ENCODE measurements at regions of chr3 and their contacts with region 1.

Region 1: GRCh38 chr3:172039436-172040077 is at the start of gene FNDC3B:
- DNase-seq: peak; percentile 97
- total RNA-seq, gene FNDC3B: 139 TPM

Region 2: DNA sequence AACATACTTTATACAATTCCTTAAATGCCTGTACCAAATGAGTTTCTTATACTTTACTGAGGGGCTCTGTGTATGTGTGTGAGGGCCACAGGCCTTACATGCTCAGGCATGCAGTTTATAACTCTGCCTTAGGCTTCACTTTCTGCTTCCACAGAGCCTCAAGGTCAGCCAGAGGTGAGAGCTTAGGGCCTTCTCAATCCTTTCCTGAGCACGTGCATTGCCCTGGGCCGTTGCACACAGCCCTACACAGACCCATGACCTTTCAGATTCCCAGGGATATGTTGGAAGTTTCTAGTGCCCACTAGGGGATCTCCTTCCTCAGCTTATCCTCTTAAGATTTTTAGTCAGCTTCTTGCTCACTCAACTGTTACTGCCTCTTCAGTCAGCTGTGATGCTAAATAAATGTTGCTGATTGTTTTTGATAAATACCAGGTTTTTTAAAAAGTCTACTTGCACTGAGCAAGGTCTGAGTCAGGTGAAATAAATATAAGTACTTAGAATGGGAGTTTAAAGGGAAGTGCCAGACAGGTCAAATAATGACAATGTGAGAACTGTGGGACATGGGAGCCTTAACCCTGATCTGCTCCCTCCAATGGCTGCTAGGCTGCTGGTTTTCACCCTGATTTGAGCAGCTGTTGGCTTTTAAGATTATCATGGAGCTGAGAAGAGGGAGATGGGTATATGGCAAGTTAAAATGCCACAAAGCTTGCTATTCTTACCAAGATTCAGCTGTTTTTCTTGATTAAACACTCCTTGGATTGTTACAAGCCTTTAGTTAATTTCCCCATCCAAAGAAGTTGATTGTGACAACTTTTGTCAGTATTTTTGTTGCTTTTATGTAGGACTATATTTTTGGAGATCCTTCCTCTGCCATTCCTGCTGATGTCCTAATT is 398.8 kb before region 1 on chr3:
- intact Hi-C with region 1: no loop called
- DNase-seq: no peak

Region 3: GRCh38 chr3:171809821-171810628 is 229.5 kb before region 1 on chr3 and contains the start of gene PLD1:
- intact Hi-C with region 1: loop called (anchors 2 kb)
- DNase-seq: peak; percentile 91
- total RNA-seq, gene PLD1: 56.5 TPM

Region 4: DNA sequence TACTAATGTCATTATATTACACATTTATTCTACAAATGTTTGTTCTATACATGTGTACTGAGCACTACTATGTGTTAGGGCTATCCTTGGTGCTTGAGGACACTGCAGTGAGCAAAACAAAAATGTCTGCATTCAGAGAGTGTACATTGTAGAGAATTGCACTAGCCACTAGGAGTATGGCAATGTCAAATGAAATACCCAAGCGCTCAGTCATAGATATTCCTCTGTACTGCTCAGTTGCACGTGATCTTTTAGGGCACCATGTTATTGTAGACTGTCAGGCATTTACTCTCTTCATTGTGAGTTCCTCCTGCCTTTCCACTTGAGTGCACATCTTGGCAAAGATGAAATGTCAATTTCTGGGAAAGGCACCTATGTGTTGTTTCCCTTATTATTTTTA is 36.7 kb after region 1 on chr3:
- intact Hi-C with region 1: loop called (anchors 5 kb)
- DNase-seq: no peak

Region 5: GRCh38 chr3:172153335-172153861 is 113.8 kb after region 1 on chr3:
- intact Hi-C with region 1: loop called (anchors 2 kb)
- DNase-seq: peak; percentile 96

Region 6: GRCh38 chr3:172317984-172318383 is 278.4 kb after region 1 on chr3:
- intact Hi-C with region 1: loop called (anchors 5 kb)
- DNase-seq: no peak